ENCODE measurements at regions of chr19 and their contacts with region 1.

Region 1: GRCh38 chr19:6632002-6632621 is 37.8 kb downstream of the TNFSF14 start:
- DNase-seq: no peak
- H3K4me3 ChIP-seq: no peak overlapping the region
- H3K27ac ChIP-seq: no peak overlapping the region
- H3K4me1 ChIP-seq: no peaks in the 10 kb centered on the region
- H3K27me3 ChIP-seq: no peaks in the 10 kb centered on the region
- CTCF ChIP-seq: peak; percentile 75 to 85 (median 79)
- POLR2A ChIP-seq: no peak

Region 2: GRCh38 chr19:6516659-6517291 is 115.3 kb before region 1 on chr19:
- intact Hi-C with region 1: loop called (anchors 2 kb)
- DNase-seq: no peak
- H3K4me3 ChIP-seq: peak overlapping the region; percentile 68 to 77
- H3K27ac ChIP-seq: peak overlapping the region; percentile 72
- H3K4me1 ChIP-seq: no peaks in the 10 kb centered on the region
- H3K27me3 ChIP-seq: no peaks in the 10 kb centered on the region
- CTCF ChIP-seq: peak; percentile 74 to 97 (median 96)
- POLR2A ChIP-seq: no peak

Region 3: DNA sequence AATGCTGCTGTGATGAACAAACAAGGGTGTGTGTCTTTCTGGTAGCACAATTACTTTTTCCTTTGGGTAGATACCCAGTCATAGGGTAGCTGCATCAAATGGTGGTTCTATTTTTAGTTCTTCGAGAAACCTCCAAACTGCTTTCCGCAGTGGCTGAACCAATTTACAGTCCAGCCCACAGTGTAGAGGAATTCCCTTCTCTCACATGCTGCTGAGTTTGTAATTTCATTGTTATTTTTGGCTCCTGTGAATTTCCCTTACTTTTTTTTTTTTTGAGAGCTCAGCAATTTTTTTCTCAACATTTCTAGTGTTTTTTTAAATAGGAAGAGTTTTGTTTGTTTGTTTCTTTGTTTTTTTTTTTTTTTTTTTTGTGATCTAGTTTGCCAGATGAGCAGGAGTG is 217.8 kb after region 1 on chr19:
- intact Hi-C with region 1: loop called (anchors 5 kb)
- DNase-seq: no peak
- H3K4me3 ChIP-seq: no peak overlapping the region
- H3K27ac ChIP-seq: no peak overlapping the region
- H3K4me1 ChIP-seq: no peaks in the 10 kb centered on the region
- H3K27me3 ChIP-seq: no peaks in the 10 kb centered on the region
- CTCF ChIP-seq: no peak
- POLR2A ChIP-seq: no peak

Region 4: DNA sequence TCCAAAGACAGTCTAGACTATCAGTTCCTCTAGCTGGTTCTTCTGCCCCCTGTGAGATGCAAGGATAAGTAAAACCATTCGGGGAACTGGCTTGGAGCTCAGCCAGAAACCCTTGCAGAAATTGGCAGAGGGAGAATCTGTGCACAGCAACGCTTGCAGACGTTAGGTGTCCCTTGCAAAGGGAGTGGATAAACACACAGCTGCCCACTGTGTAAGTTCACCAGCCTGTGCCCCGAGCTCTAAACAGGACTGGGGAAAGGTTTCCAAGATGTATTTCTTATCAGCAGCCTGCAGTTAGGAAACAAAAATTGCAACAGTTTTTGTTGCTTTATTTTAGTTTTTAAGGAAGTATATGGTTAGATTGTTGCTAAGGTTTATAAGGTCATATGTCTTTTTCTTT is 236.2 kb after region 1 on chr19:
- intact Hi-C with region 1: loop called (anchors 5 kb)
- DNase-seq: no peak
- H3K4me3 ChIP-seq: no peak overlapping the region
- H3K27ac ChIP-seq: no peak overlapping the region
- H3K4me1 ChIP-seq: no peaks in the 10 kb centered on the region
- H3K27me3 ChIP-seq: no peaks in the 10 kb centered on the region
- CTCF ChIP-seq: no peak
- POLR2A ChIP-seq: no peak